Pancreas (tissue), 10 donors: ENCODE measurements at regions of chr10 and their contacts with region 1.

Region 1: GRCh38 chr10:71708301-71708703 is 11.3 kb downstream of the C10orf105 start:
- DNase-seq: peak in 3 of 6 donors; percentile 35 to 75 (median 49)
- ATAC-seq: peak; percentile 46 to 76 (median 68)
- H3K4me3 ChIP-seq: no peak overlapping the region
- H3K27ac ChIP-seq: no peak overlapping the region
- H3K4me1 ChIP-seq: peaks cover 0 to 2% (median 0%) of the 10 kb centered on the region in 3 donors
- H3K27me3 ChIP-seq: no peaks in the 10 kb centered on the region
- CTCF ChIP-seq: peak; percentile 11 to 71 (median 52)

Region 2: GRCh38 chr10:71302874-71303568 is 405.3 kb before region 1 on chr10:
- intact Hi-C with region 1: loop called in 1 of 3 experiments (anchors 10 kb)
- DNase-seq: peak in 1 of 6 donors; percentile 17
- ATAC-seq: peak; percentile 53 to 75 (median 63)
- H3K4me3 ChIP-seq: no peak overlapping the region
- H3K27ac ChIP-seq: no peak overlapping the region
- H3K4me1 ChIP-seq: no peaks in the 10 kb centered on the region
- H3K27me3 ChIP-seq: no peaks in the 10 kb centered on the region
- CTCF ChIP-seq: peak; percentile 10 to 27 (median 24)

Region 3: GRCh38 chr10:71805776-71806703 is 97.7 kb after region 1 on chr10:
- intact Hi-C with region 1: loop called in 1 of 3 experiments (anchors 10 kb)
- DNase-seq: peak in 4 of 6 donors; percentile 46 to 72 (median 50)
- ATAC-seq: peak; percentile 53 to 90 (median 78)
- H3K4me3 ChIP-seq: no peak overlapping the region
- H3K27ac ChIP-seq: no peak overlapping the region
- H3K4me1 ChIP-seq: peaks cover 0 to 3% (median 0%) of the 10 kb centered on the region in 3 donors
- H3K27me3 ChIP-seq: no peaks in the 10 kb centered on the region
- CTCF ChIP-seq: no peak

Region 4: GRCh38 chr10:72158176-72158575 is 449.9 kb after region 1 on chr10:
- intact Hi-C with region 1: no loop called
- DNase-seq: no peak
- ATAC-seq: no peak
- H3K4me3 ChIP-seq: no peak overlapping the region
- H3K27ac ChIP-seq: no peak overlapping the region
- H3K4me1 ChIP-seq: no peaks in the 10 kb centered on the region
- H3K27me3 ChIP-seq: no peaks in the 10 kb centered on the region
- CTCF ChIP-seq: no peak